MCF 10A (cell line): ENCODE measurements at regions of chr16 and their contacts with region 1.

Region 1: DNA sequence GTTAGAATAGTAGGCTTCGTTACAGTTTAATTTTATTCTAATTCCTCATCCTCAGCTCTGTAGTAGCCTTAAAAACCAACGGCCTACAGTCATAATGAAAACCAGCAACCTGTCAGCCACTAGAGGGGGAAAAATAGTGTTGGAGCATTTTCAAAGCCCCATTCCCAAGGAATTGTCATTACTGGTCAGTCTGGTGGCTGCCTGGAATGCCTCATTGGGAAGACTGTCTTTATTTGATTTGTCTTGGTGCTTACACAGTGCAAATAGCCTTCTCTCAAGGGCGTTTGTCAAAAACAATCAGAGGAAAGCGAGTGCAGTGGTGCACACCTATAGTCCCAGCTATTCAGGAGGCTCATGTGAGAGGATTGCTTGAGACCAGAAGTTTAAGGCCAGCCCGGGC is 4.7 kb downstream of the LPCAT2 start:
- DNase-seq: no peak
- H3K4me3 Mint-ChIP-seq: no peak overlapping the region
- H3K27ac Mint-ChIP-seq: no peak overlapping the region
- H3K4me1 Mint-ChIP-seq: peaks cover 14% of the 10 kb centered on the region
- H3K27me3 Mint-ChIP-seq: no peaks in the 10 kb centered on the region
- CTCF ChIP-seq: no peak

Region 2: GRCh38 chr16:55280587-55280986 is 233.0 kb before region 1 on chr16:
- CTCF ChIA-PET with region 1: no interaction called
- POLR2A ChIA-PET with region 1: no interaction called
- intact Hi-C with region 1: no loop called
- DNase-seq: no peak
- H3K4me3 Mint-ChIP-seq: no peak overlapping the region
- H3K27ac Mint-ChIP-seq: no peak overlapping the region
- H3K4me1 Mint-ChIP-seq: peaks cover 26% of the 10 kb centered on the region
- H3K27me3 Mint-ChIP-seq: no peaks in the 10 kb centered on the region
- CTCF ChIP-seq: no peak

Region 3: GRCh38 chr16:55502801-55503366 is 10.7 kb before region 1 on chr16:
- CTCF ChIA-PET with region 1: interaction called, 22 read pairs
- POLR2A ChIA-PET with region 1: interaction called, 3 read pairs
- intact Hi-C with region 1: no loop called
- DNase-seq: peak; percentile 93
- H3K4me3 Mint-ChIP-seq: no peak overlapping the region
- H3K27ac Mint-ChIP-seq: no peak overlapping the region
- H3K4me1 Mint-ChIP-seq: peaks cover 26% of the 10 kb centered on the region
- H3K27me3 Mint-ChIP-seq: no peaks in the 10 kb centered on the region
- CTCF ChIP-seq: no peak